Activated T-helper 2 cell treated with anti-CD3 and anti-CD28 coated beads, Interferon-gamma antibody, Interleukin-2, Interleukin-4, amounts not matched to agents 10 μg/mL and 5 μg/mL and 100 μg/mL, durations not matched to agents 14 hours and 24 hours and 36 hours (primary cell): ENCODE measurements at regions of chr9 and their contacts with region 1.

Region 1: DNA sequence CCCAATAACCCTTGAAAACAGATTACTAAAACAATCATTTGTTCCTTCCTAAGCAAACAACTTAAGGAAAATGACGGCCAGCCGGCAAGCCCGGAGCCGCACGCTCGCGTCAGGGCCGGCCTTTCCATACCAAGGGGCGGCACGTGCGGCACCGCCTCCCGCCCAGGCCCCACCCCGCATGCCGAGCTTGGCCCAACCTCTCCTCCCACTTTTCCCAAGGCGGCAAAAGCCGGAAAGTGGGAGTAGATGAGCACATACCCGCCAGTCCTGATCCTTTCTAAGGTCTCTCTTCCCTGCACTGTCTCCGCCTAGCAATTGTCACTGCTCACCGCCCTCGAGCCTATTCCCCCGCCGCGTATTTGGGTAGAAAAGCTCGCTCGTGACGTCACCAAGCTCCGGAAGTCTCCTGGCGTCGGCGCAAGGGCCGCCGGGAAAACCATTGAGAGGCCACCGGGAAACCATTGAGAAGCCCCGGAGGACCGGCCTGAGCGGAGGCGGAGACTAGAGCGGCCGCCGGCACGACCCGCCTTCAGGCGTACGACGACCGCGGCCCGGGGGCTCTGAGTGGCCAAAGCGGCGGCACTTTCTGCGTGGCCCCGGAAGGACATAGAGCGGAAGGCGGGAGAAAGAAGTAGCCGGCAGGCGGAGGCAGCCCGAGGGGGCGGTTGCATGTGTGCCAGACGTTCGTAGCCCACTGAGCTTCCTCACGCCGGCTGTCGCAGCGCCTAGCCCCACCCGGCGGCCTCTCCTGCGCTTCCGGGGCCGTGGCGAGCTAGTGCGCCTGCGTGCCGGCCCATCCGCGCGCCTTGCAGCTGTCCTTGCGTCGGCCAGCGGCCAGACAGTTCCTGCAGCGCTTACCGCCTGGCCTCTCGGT is at the starts of genes NCBP1 and TSTD2:
- DNase-seq: peak; percentile 96
- H3K4me3 Mint-ChIP-seq: peak within 1 kb of the TSS; percentile 89
- H3K27ac Mint-ChIP-seq: peak within 1 kb of the TSS; percentile 98
- H3K4me1 Mint-ChIP-seq: peaks cover 46% of the 10 kb centered on the region
- H3K27me3 Mint-ChIP-seq: no peaks in the 10 kb centered on the region
- total RNA-seq, gene NCBP1: 44.2 and 44.8 TPM in 2 replicates
- total RNA-seq, gene TSTD2: 18.8 and 19.4 TPM in 2 replicates

Region 2: GRCh38 chr9:97237951-97238851 is 395.0 kb before region 1 on chr9:
- intact Hi-C with region 1: loop called (anchors 5 kb)
- DNase-seq: peak; percentile 74
- H3K4me3 Mint-ChIP-seq: peak overlapping the region; percentile 93
- H3K27ac Mint-ChIP-seq: peak overlapping the region; percentile 91
- H3K4me1 Mint-ChIP-seq: peaks cover 20% of the 10 kb centered on the region
- H3K27me3 Mint-ChIP-seq: peaks cover 2% of the 10 kb centered on the region

Region 3: GRCh38 chr9:97803167-97804058 is 170.2 kb after region 1 on chr9:
- intact Hi-C with region 1: loop called (anchors 10 kb)
- DNase-seq: peak; percentile 66
- H3K4me3 Mint-ChIP-seq: peak overlapping the region; percentile 78
- H3K27ac Mint-ChIP-seq: no peak overlapping the region
- H3K4me1 Mint-ChIP-seq: peaks cover 3% of the 10 kb centered on the region
- H3K27me3 Mint-ChIP-seq: peaks cover 37% of the 10 kb centered on the region

Region 4: DNA sequence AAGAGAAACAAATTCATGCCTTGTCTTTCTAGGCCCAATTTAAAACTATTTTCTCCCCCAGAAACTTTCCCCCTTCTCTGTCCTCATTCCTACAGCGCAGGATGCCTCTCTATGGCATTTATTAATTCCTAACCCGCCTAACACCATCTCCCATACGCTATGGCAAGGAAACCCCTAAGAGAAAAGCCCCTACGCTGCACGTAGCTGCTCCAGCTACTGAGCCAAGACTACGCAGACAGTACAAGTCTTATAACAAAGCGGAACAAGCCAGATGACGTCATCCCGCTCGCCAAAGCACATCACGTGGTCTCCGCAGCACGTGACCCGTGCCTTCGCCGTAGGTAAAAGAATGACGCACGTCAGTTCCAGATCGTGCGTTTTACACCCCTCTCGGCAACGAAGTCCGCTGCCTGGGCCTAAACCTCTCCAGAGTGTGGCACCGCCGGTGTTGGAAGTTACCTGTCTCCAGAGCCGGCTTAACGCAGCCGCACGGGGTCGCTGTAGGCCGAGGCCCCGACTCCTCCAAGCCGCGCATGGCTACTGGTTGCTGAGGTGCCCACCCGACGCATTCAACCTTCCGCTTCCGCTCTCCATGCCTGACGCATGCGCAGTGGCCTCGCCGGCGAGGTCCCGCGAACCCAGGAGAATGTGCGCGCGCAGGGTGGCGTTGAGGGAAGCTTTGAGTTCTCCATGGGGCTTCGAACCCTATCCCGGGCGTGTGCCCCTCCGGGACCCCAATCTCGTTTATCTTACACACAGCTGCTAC is 288.9 kb after region 1 on chr9 and contains the start of gene TRMO:
- intact Hi-C with region 1: loop called (anchors 2 kb)
- DNase-seq: peak; percentile 96
- H3K4me3 Mint-ChIP-seq: peak within 1 kb of the TSS; percentile 97
- H3K27ac Mint-ChIP-seq: peak within 1 kb of the TSS; percentile 100
- H3K4me1 Mint-ChIP-seq: peaks cover 42% of the 10 kb centered on the region
- H3K27me3 Mint-ChIP-seq: peaks cover 2% of the 10 kb centered on the region
- total RNA-seq, gene TRMO: 13.4 and 15.3 TPM in 2 replicates

Region 5: DNA sequence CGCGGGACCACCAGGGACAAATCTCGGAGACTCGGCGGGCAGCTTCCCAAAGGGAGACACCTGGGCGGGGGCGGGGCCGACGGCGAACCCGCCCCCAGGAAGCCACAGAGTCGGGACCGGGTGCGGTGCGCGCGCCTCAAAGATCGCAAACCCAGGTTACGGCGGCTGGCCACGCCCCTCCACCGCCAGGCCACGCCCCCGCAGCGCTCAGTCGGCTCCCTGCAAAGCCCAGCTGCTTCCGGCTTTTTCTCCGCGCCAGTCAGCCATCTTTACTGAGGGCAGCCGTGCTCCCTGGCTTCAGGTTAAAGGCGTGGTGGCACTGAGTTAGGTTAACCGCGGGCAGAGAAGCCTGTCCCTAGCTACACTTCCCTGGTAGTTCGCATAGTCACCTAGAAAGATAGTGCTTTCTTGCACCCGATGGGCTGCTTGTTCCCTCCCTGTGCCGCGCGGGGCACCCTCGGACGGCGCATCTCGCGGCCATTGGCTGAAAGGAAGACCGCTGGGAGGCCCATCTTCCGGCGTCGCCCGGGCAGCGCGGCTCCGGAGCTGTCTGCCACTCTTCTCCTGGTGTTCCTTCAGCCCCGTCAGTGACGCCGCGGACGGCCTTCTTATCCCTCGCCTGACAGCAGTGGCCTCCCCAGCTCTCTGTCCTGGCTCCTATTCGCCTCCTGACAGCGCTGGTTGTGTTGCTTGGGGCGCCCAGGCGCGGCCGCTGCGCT is 622.5 kb after region 1 on chr9 and contains the start of gene TBC1D2:
- intact Hi-C with region 1: loop called (anchors 10 kb)
- DNase-seq: peak; percentile 96
- H3K4me3 Mint-ChIP-seq: peak within 1 kb of the TSS; percentile 97
- H3K27ac Mint-ChIP-seq: peak within 1 kb of the TSS; percentile 94
- H3K4me1 Mint-ChIP-seq: peaks cover 23% of the 10 kb centered on the region
- H3K27me3 Mint-ChIP-seq: peaks cover 12% of the 10 kb centered on the region
- total RNA-seq, gene TBC1D2: 1.3 and 1.5 TPM in 2 replicates